ENCODE measurements at regions of chr1 and their contacts with region 1.

Region 1: GRCh38 chr1:204438628-204439027 is 27.0 kb upstream of the PPP1R15B start:
- DNase-seq: no peak
- H3K4me3 Mint-ChIP-seq: no peak overlapping the region
- H3K27ac Mint-ChIP-seq: no peak overlapping the region
- H3K4me1 Mint-ChIP-seq: peaks cover under 1% of the 10 kb centered on the region
- H3K27me3 Mint-ChIP-seq: no peaks in the 10 kb centered on the region

Region 2: GRCh38 chr1:204257954-204258752 is 180.5 kb before region 1 on chr1:
- CTCF ChIA-PET with region 1: no interaction called
- DNase-seq: peak; percentile 46
- H3K4me3 Mint-ChIP-seq: no peak overlapping the region
- H3K27ac Mint-ChIP-seq: no peak overlapping the region
- H3K4me1 Mint-ChIP-seq: no peaks in the 10 kb centered on the region
- H3K27me3 Mint-ChIP-seq: peaks cover 17% of the 10 kb centered on the region

Region 3: DNA sequence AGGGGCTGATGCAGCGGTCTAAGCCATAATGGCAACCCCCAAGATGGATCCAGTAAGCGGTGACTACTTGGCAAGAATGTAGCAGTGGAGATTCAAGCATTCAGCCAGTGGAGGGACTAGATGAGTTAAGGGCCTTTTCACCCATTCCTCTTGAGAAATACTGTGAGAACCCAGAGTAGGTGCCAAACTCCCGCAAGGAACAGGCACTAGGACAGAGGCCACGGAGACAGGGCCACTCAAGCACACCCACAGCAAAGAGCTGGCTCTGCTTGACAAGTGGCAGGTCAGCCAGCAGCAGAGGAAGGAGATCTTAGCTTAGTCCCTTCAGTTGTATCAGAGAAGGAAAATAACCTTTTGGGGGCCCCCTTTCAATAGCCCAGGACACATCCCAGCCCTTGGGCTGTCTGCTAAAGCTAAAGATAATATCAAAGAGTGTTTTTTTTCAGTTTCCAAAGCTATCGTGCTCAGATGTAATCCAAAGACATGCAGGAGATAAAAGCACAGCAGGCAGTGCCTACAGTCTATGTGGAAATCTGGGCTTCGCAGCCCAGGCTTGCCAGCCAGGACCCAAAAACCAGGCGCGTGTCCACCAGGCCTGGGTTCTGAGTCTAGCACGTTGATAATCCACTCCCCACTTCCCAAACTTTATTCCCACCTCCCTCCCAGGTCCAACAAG is 162.8 kb before region 1 on chr1:
- CTCF ChIA-PET with region 1: no interaction called
- DNase-seq: no peak
- H3K4me3 Mint-ChIP-seq: no peak overlapping the region
- H3K27ac Mint-ChIP-seq: no peak overlapping the region
- H3K4me1 Mint-ChIP-seq: no peaks in the 10 kb centered on the region
- H3K27me3 Mint-ChIP-seq: peaks cover 39% of the 10 kb centered on the region

Region 4: DNA sequence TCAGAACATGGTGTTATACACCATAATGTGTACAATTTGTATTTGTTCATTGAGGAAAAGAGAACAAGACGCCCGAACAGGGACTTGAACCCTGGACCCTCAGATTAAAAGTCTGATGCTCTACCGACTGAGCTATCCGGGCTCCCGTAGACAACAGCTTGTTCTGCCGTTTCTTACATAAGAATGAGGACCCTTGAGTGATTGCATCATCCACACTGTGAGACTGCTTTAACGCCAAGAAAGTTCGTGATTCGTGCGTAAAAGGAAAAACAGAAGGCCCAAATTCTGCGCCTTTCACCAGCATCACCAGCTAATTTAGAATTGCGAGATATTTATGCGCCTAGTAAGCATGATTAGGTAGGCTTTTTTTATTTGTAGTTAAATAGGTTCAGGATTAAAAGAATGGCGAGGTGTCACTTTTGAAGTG is 68.3 kb after region 1 on chr1:
- CTCF ChIA-PET with region 1: interaction called, 508 read pairs
- DNase-seq: peak; percentile 88
- H3K4me3 Mint-ChIP-seq: peak overlapping the region; percentile 87
- H3K27ac Mint-ChIP-seq: peak overlapping the region; percentile 100
- H3K4me1 Mint-ChIP-seq: peaks cover 57% of the 10 kb centered on the region
- H3K27me3 Mint-ChIP-seq: peaks cover 5% of the 10 kb centered on the region